Right ventricle myocardium inferior (tissue), 1 donor: ENCODE measurements at regions of chr2 and their contacts with region 1.

Region 1: GRCh38 chr2:241217320-241218031 is 29.0 kb downstream of the ANO7 start:
- DNase-seq: peak; percentile 88
- ATAC-seq: peak; percentile 85

Region 2: GRCh38 chr2:241149925-241150659 is 67.4 kb before region 1 on chr2 and contains the start of gene PPP1R7:
- intact Hi-C with region 1: loop called (anchors 5 kb)
- DNase-seq: peak; percentile 98
- ATAC-seq: peak; percentile 97
- total RNA-seq, gene PPP1R7: 66.6 TPM